ENCODE measurements at regions of chr5 and their contacts with region 1.

Region 1: DNA sequence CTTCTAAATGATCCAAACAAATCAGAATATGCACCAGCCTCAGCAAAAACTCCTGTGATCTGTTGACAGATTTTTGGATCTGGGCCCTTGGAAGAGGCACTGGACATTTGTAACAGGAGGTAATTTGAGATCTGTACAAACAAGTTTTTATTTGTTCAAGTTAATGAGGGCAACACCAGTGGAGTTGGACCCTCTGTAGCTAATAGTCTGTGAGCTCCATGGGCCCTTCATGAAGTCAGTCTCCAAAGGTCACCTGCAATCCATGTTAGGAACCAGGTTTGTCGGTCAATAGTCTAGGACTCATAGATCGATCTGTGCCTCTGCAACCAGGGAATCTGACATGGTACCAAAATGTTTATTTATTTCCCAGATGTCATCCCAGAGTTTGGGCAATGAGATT is 40.9 kb downstream of the PAM start:
- DNase-seq: no peak
- ATAC-seq: peak; percentile 48 to 49

Region 2: GRCh38 chr5:102531506-102531905 is 264.5 kb before region 1 on chr5:
- intact Hi-C with region 1: no loop called
- DNase-seq: no peak
- ATAC-seq: peak; percentile 32 to 67

Region 3: DNA sequence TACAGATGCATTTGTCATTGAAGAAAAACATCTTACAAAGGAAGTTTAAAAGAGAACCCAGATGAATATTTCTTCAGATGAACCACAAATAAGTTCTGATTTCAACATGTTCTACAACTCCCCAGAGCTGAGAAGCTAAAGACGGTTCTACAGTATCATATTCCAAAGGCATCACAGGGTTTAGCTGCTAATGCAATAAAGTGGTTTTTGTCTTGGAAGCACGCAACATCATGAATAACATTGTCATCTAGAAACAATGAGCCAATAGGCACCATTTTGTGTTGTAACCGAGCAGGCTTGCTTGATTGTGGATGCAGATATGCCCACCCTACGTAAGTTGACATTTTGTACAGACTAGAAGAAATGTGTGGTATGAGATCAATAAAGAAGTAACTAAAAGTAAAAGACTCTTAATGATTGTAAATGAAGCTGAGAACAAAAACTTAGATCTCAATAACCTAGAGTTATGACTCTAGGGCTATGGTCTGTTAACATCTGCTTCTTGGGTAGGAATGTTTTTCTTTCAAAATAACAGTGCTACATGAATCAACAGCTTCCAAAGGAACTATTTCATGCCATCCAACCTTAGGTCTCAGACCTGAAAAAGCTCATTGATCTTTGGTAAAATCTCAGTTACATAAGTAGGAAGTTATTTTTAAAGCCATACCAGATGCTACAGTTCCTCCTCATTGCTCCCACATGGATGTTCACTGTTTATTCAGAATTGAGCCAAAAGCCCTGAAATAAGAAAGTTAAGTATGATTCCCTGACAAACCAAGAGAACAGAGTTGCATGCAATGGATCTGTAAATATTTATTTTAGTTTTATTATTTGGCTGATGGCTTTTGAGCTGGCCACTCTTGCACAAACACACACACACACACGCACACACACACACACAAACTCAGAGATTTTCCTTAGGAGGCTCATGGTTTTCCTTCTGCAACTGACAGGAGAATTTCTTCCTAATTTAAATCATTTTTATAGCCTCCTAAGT is 178.5 kb before region 1 on chr5:
- intact Hi-C with region 1: no loop called
- DNase-seq: no peak
- ATAC-seq: no peak

Region 4: DNA sequence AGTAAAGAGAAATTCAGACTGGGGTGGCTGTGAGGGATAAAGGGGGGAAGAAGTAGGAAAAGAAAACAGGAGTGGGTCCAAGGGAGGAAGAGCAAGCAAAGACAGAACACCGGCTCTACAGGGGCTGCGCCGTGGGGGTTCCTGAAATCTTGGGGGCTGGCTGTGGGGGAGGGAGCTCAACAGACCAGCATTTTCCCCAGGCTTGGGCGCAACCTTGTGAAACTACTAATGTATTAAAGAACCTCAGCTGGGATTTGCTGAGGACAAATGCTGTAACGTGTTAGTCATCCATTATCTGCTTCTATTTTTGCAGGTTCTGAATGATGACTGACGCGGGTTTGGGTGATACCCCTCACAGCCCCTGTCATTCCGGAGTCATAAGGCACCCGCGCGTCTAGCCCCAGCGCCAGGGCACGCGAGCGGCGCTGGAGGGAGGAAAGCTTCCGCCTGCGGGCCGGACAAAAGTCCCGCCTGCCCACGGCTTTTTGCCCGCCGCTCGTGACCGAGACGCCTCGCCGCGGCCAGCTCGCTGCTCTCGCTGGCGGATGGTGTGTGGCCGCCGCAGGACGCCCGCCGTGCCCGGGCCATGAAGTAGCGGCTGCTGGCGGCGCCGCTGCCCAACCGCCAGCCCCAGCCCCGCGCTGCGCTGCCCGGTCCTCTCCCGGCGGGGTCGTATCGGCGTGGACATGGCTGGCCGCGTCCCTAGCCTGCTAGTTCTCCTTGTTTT is 69.7 kb after region 1 on chr5:
- intact Hi-C with region 1: loop called in 1 of 2 experiments (anchors 5 kb)
- DNase-seq: peak; percentile 85
- ATAC-seq: peak; percentile 93 to 96

Region 5: DNA sequence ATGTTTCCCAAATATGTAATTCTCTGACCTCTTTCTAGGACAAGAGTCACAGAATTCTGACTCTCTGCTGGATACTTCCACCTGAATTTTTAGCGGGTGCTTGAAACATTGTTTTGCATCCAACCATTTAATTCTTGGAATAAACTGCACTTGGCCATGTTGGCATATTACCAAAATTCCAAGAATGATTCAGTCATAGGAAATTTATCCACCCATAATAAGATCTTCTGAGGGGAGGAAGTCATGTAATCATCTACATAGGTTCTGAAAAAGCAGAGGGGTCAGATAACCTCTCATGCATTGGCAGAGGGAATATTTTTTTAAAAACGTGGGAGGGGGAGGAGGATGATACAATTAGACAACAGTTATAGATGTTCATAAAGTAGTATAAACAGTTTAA is 116.0 kb after region 1 on chr5:
- intact Hi-C with region 1: no loop called
- DNase-seq: no peak
- ATAC-seq: peak; percentile 23 to 77